A549 (cell line): ENCODE measurements at regions of chr5 and their contacts with region 1.

Region 1: GRCh38 chr5:87258507-87258906 is 9.2 kb upstream of the RASA1 start:
- DNase-seq: no peak
- ATAC-seq: no peak
- H3K4me3 ChIP-seq: no peak overlapping the region
- H3K27ac ChIP-seq: no peak overlapping the region
- H3K4me1 ChIP-seq: no peaks in the 10 kb centered on the region
- CTCF ChIP-seq: no peak
- EP300 ChIP-seq: no peak
- POLR2A ChIP-seq: no peak
- RAD21 ChIP-seq: no peak

Region 2: DNA sequence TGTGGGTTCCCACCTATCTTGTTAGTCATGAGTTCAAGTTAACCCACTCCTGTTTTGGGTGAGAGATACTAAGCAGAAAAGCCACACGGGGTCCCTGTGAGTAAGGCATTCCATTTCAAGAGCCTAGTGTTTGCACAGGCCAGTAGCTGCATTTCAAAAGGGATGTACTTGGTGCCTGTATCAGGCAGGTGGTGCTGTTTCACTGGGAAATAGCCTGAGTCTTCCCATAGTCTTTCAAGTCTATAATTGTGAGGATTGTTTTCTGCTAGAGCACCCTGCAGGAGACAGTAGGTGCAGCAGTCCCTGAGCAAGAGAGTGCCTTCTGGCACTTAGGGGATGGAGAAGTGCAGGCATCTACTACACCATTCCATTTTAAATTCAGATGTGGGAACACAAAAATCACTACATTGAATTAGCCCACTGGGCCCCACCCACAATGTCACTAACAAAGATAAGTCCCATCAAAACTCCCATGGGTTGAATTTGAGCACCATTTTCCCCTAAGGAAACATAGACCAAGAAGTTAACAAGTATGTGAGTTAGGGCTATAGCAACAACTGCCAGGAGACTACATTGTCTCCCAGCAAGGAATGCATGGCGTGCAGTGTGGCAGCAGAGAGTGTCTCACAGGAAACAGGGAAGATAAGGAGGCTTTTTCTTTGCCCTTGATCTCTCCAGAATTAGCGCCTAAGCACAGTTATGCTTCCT is 377.6 kb before region 1 on chr5:
- CTCF ChIA-PET with region 1: no interaction called
- POLR2A ChIA-PET with region 1: no interaction called
- DNase-seq: peak; percentile 25 to 83
- ATAC-seq: peak; percentile 98 to 99
- H3K4me3 ChIP-seq: no peak overlapping the region
- H3K27ac ChIP-seq: no peak overlapping the region
- H3K4me1 ChIP-seq: no peaks in the 10 kb centered on the region
- CTCF ChIP-seq: peak; percentile 52
- EP300 ChIP-seq: no peak
- POLR2A ChIP-seq: no peak
- RAD21 ChIP-seq: peak; percentile 72 to 80

Region 3: GRCh38 chr5:87195104-87195591 is 63.4 kb before region 1 on chr5:
- CTCF ChIA-PET with region 1: no interaction called
- POLR2A ChIA-PET with region 1: no interaction called
- DNase-seq: no peak
- ATAC-seq: no peak
- H3K4me3 ChIP-seq: no peak overlapping the region
- H3K27ac ChIP-seq: no peak overlapping the region
- H3K4me1 ChIP-seq: no peaks in the 10 kb centered on the region
- CTCF ChIP-seq: no peak
- EP300 ChIP-seq: no peak
- POLR2A ChIP-seq: no peak
- RAD21 ChIP-seq: no peak

Region 4: GRCh38 chr5:87307796-87308423 is 49.4 kb after region 1 on chr5:
- CTCF ChIA-PET with region 1: no interaction called
- POLR2A ChIA-PET with region 1: no interaction called
- DNase-seq: no peak
- ATAC-seq: no peak
- H3K4me3 ChIP-seq: no peak overlapping the region
- H3K27ac ChIP-seq: no peak overlapping the region
- H3K4me1 ChIP-seq: no peaks in the 10 kb centered on the region
- CTCF ChIP-seq: no peak
- EP300 ChIP-seq: no peak
- POLR2A ChIP-seq: no peak
- RAD21 ChIP-seq: no peak

Region 5: DNA sequence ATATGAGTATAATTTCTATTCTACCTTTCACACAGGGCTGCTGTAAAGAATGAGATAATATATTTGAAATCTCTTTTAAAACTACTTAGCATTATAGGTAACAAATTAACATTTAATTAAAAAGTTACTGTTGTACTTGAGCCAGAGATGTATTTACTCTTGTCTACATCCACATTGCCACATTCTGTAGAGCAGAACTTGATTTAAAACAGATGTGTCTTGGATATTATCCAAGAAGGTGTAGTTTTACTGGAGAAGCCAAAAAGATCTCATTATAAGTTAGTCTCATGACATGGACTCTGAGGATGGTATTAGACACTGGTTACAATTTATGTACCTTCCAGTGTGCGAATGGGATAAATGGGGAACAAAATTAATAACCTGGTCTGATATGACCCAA is 447.4 kb after region 1 on chr5:
- CTCF ChIA-PET with region 1: no interaction called
- POLR2A ChIA-PET with region 1: interaction called, 14 read pairs
- DNase-seq: no peak
- ATAC-seq: no peak
- H3K4me3 ChIP-seq: no peak overlapping the region
- H3K27ac ChIP-seq: no peak overlapping the region
- H3K4me1 ChIP-seq: no peaks in the 10 kb centered on the region
- CTCF ChIP-seq: no peak
- EP300 ChIP-seq: no peak
- POLR2A ChIP-seq: no peak
- RAD21 ChIP-seq: no peak